Gastrocnemius medialis (tissue), 4 donors: ENCODE measurements at regions of chr1 and their contacts with region 1.

Region 1: DNA sequence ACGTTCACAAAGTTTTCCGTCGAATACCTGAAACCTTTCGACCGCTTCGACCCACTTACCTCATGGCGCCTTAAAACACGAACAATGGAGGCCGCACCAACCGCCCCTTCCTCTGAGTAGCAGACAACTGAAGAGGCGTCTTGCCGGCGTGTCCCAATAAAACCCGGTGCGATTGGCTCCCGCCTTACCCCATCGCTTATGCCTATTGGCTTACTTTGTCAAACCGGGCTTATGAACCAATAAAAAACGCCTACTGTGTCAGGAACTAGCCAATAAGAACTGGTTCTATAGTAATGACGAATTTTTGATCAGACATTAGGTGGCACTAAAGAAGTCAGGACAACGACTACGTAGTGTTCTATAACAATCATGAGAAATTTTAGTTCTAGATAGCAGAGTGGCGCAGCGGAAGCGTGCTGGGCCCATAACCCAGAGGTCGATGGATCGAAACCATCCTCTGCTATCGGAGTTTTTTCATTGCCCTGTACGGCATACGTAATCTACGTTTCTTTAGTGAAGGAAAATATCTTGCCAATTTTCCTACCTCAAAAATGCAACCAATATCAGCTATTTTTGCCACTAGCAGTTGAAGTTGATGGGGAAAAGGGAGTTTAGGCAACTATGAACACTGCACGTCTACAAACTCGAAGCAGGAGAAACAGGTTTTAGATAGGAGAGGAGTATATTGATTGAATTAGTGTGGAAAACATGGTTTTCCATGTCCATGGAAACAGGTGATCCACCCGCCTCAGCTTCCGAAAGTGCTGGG is at the start of gene ILF2:
- DNase-seq: peak; percentile 98 to 99
- ATAC-seq: peak; percentile 99 to 100
- H3K4me3 ChIP-seq: peak within 1 kb of the TSS; percentile 72 to 99 (median 86)
- H3K27ac ChIP-seq: peak within 1 kb of the TSS; percentile 87 to 90 (median 89)
- H3K4me1 ChIP-seq: peaks cover 15 to 17% of the 10 kb centered on the region in 2 donors
- H3K27me3 ChIP-seq: no peaks in the 10 kb centered on the region
- CTCF ChIP-seq: no peak
- POLR2A ChIP-seq: peak; percentile 97
- total RNA-seq, gene ILF2: 110 to 138 (median 117) TPM

Region 2: DNA sequence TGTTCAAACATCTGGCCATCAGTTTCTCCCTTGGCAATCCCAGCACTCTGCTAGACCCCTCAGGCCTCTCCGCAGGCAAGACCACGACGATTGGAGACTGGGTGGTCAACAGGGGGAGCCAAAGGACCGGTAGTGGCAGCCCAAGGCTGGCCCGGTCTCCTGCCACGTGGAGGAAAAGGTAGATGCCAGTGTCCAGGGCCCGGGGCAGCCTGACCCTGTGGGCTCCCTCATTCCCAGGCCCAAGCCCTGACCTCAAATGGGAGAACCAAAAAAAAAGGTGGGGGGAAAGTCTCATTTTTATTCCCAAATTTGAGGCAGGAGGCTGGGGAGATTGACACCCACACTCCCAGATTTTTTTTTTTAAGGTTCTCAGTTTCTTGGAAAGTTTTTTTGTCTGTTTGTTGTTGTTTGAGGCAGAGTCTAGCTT is 160.0 kb before region 1 on chr1:
- in situ Hi-C with region 1: no loop called
- intact Hi-C with region 1: loop called (anchors 5 kb)
- DNase-seq: peak; percentile 59 to 79
- ATAC-seq: peak; percentile 55 to 63
- H3K4me3 ChIP-seq: no peak overlapping the region
- H3K27ac ChIP-seq: no peak overlapping the region
- H3K4me1 ChIP-seq: peaks cover 17 to 18% of the 10 kb centered on the region in 2 donors
- H3K27me3 ChIP-seq: no peaks in the 10 kb centered on the region
- CTCF ChIP-seq: peak; percentile 82 to 95 (median 91)
- POLR2A ChIP-seq: no peak

Region 3: DNA sequence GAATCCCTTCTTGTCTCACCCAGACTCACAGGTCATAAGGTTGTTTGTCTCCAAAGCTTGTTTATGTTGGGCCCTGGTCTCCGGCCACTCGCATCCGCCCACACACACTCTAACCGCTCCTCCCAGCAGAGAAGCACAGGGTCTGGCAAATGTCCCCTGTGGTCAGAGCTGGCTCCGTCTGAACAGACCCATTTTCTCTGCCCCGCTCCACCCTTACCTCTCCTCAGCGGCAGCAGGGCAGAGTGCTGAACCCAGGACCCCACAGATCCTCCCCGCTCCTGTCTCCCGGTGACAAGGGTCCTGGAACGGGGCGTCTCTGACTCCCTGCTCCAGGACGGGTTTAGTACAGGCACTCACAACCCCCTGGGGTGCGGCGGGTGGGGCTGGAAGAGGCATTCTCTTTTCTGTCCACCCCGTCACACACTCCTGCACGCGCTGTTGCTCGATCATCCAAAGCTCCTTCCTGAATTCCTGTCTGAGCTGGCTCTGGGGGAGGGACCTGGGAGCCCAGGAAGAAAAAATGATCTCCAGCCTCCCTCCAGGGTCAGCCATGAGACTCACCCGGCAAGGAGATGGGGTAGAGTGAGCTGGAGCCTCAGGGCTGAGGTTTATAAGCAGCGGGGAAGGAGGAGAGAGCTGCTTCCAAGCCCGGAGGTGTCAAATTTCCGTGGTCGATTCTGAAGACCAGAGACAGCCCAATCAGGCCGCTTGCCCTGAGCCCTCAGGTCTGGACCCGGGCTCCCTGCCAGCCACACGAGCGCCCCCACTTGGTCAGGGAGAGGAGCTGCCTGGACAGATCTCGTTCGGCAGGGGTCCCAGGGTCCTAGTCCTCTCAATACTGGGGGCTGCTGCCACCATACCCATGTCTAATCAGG is 43.9 kb before region 1 on chr1 and contains the start of gene S100A13:
- in situ Hi-C with region 1: no loop called
- intact Hi-C with region 1: loop called (anchors 1 kb)
- DNase-seq: peak; percentile 71 to 83
- ATAC-seq: peak; percentile 42 to 50
- H3K4me3 ChIP-seq: peak within 1 kb of the TSS; percentile 62 to 76 (median 64)
- H3K27ac ChIP-seq: peak within 1 kb of the TSS; percentile 95 to 100 (median 100)
- H3K4me1 ChIP-seq: peaks cover 36 to 50% of the 10 kb centered on the region in 2 donors
- H3K27me3 ChIP-seq: no peaks in the 10 kb centered on the region
- CTCF ChIP-seq: peak; percentile 43 to 59 (median 53)
- POLR2A ChIP-seq: peak; percentile 50 to 64
- total RNA-seq, gene S100A13: 113 to 237 (median 159) TPM

Region 4: GRCh38 chr1:153749408-153750005 is 78.5 kb after region 1 on chr1:
- in situ Hi-C with region 1: loop called (anchors 5 to 10 kb)
- intact Hi-C with region 1: no loop called
- DNase-seq: peak; percentile 88 to 93
- ATAC-seq: peak; percentile 78 to 88
- H3K4me3 ChIP-seq: no peak overlapping the region
- H3K27ac ChIP-seq: peak overlapping the region; percentile 68 to 95 (median 83)
- H3K4me1 ChIP-seq: peaks cover 36 to 51% of the 10 kb centered on the region in 2 donors
- H3K27me3 ChIP-seq: no peaks in the 10 kb centered on the region
- CTCF ChIP-seq: peak; percentile 88 to 95 (median 91)
- POLR2A ChIP-seq: peak in 1 of 2 donors; percentile 38

Region 5: GRCh38 chr1:153967082-153968000 is 296.3 kb after region 1 on chr1 and contains the start of gene CREB3L4:
- in situ Hi-C with region 1: loop called in 1 of 4 experiments (anchors 10 kb)
- intact Hi-C with region 1: no loop called
- DNase-seq: peak; percentile 97
- ATAC-seq: peak; percentile 85 to 90
- H3K4me3 ChIP-seq: peak within 1 kb of the TSS; percentile 56 to 68 (median 62)
- H3K27ac ChIP-seq: peak within 1 kb of the TSS; percentile 87 to 94 (median 90)
- H3K4me1 ChIP-seq: peaks cover 29 to 34% of the 10 kb centered on the region in 2 donors
- H3K27me3 ChIP-seq: no peaks in the 10 kb centered on the region
- CTCF ChIP-seq: peak in 4 of 5 experiments; percentile 25 to 51 (median 34)
- POLR2A ChIP-seq: peak; percentile 74 to 89
- total RNA-seq, gene CREB3L4: 4.5 to 7.9 (median 5.7) TPM